CD14-positive monocyte (primary cell): ENCODE measurements at regions of chr5 and their contacts with region 1.

Region 1: DNA sequence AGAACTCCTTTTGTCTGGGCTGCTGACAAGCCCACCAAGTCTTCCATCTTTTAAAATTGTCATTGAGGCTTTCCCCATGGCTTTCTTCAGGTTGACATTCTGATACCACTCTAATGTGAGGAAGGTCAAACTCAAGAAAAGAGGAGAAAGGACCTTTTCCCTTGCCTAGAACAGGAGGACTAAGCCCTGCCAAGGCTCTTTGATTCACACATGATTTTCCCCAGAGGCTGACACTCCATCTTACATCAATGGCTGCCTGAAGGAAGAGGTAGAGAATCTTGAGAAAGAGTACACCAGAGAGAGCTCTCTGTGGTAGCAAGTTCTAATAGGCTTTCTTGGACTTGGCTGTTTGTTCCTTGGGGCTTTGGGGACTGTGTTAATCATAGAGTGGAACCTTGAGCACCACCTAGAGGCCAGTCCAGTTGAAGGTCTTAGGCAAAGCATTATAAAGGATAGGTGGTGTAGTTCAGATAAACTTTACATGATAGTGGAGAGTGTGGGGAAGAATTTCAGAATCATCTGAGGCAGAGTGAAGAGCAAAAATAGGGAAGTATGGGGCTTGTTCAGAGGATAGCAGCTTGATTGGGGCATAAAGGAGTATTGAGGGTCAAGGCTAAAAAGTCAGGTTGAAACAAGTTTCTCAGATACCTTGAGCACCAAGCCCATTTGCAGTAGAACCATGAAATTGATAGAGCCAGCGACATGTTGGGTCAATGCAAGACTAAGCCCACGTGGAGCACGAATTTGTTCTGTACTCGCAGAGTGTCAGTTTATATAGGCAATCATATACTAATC is 36.7 kb downstream of the NDFIP1 start:
- DNase-seq: peak; percentile 27 to 54 (median 47)
- H3K4me3 ChIP-seq: no peak overlapping the region
- H3K4me3 Mint-ChIP-seq: no peak overlapping the region
- H3K27ac ChIP-seq: no peak overlapping the region
- H3K27ac Mint-ChIP-seq: no peak overlapping the region
- H3K4me1 ChIP-seq: no peaks in the 10 kb centered on the region
- H3K4me1 Mint-ChIP-seq: no peaks in the 10 kb centered on the region
- H3K27me3 ChIP-seq: no peaks in the 10 kb centered on the region
- H3K27me3 Mint-ChIP-seq: no peaks in the 10 kb centered on the region
- CTCF ChIP-seq: peak; percentile 78

Region 2: GRCh38 chr5:141992349-141992963 is 152.8 kb before region 1 on chr5:
- intact Hi-C with region 1: loop called (anchors 1 to 2 kb)
- DNase-seq: peak; percentile 38 to 66 (median 58)
- H3K4me3 ChIP-seq: no peak overlapping the region
- H3K4me3 Mint-ChIP-seq: no peak overlapping the region
- H3K27ac ChIP-seq: no peak overlapping the region
- H3K27ac Mint-ChIP-seq: no peak overlapping the region
- H3K4me1 ChIP-seq: no peaks in the 10 kb centered on the region
- H3K4me1 Mint-ChIP-seq: peaks cover 9% of the 10 kb centered on the region
- H3K27me3 ChIP-seq: no peaks in the 10 kb centered on the region
- H3K27me3 Mint-ChIP-seq: no peaks in the 10 kb centered on the region
- CTCF ChIP-seq: peak; percentile 88

Region 3: GRCh38 chr5:142192286-142193113 is 47.2 kb after region 1 on chr5:
- intact Hi-C with region 1: no loop called
- DNase-seq: no peak
- H3K4me3 ChIP-seq: no peak overlapping the region
- H3K4me3 Mint-ChIP-seq: no peak overlapping the region
- H3K27ac ChIP-seq: no peak overlapping the region
- H3K27ac Mint-ChIP-seq: peak overlapping the region in 1 of 7 donors; percentile 62
- H3K4me1 ChIP-seq: peaks cover 0 to 8% of the 10 kb centered on the region in 2 donors
- H3K4me1 Mint-ChIP-seq: peaks cover 12% of the 10 kb centered on the region
- H3K27me3 ChIP-seq: peaks cover 0 to 4% of the 10 kb centered on the region in 2 donors
- H3K27me3 Mint-ChIP-seq: peaks cover 3 to 7% (median 5%) of the 10 kb centered on the region in 3 donors
- CTCF ChIP-seq: no peak